ENCODE measurements at regions of chr4 and their contacts with region 1.

Region 1: GRCh38 chr4:159102622-159103383 is at the start of gene RAPGEF2:
- DNase-seq: peak; percentile 95
- H3K4me3 ChIP-seq: peak within 1 kb of the TSS; percentile 67 to 93 (median 87)
- H3K27ac ChIP-seq: peak within 1 kb of the TSS; percentile 92
- H3K4me1 ChIP-seq: peaks cover 19% of the 10 kb centered on the region
- H3K27me3 ChIP-seq: no peaks in the 10 kb centered on the region
- CTCF ChIP-seq: peak in 1 of 2 donors; percentile 2
- total RNA-seq, gene RAPGEF2: 23.4 to 47.2 TPM

Region 2: GRCh38 chr4:158856852-158857251 is 246.0 kb before region 1 on chr4:
- CTCF ChIA-PET with region 1: no interaction called
- dilution Hi-C with region 1: no loop called
- in situ Hi-C with region 1: no loop called
- intact Hi-C with region 1: loop called (anchors 2 kb)
- DNase-seq: peak; percentile 25
- H3K4me3 ChIP-seq: no peak overlapping the region
- H3K27ac ChIP-seq: no peak overlapping the region
- H3K4me1 ChIP-seq: no peaks in the 10 kb centered on the region
- H3K27me3 ChIP-seq: no peaks in the 10 kb centered on the region
- CTCF ChIP-seq: peak; percentile 44 to 63

Region 3: GRCh38 chr4:158895797-158896576 is 206.8 kb before region 1 on chr4:
- CTCF ChIA-PET with region 1: no interaction called
- dilution Hi-C with region 1: no loop called
- in situ Hi-C with region 1: no loop called
- intact Hi-C with region 1: loop called (anchors 2 kb)
- DNase-seq: peak; percentile 5
- H3K4me3 ChIP-seq: no peak overlapping the region
- H3K27ac ChIP-seq: no peak overlapping the region
- H3K4me1 ChIP-seq: no peaks in the 10 kb centered on the region
- H3K27me3 ChIP-seq: no peaks in the 10 kb centered on the region
- CTCF ChIP-seq: peak in 1 of 2 donors; percentile 53

Region 4: GRCh38 chr4:159010563-159011260 is 92.1 kb before region 1 on chr4:
- CTCF ChIA-PET with region 1: no interaction called
- dilution Hi-C with region 1: no loop called
- in situ Hi-C with region 1: loop called in 1 of 2 experiments (anchors 5 kb)
- intact Hi-C with region 1: loop called (anchors 2 kb)
- DNase-seq: peak; percentile 75
- H3K4me3 ChIP-seq: no peak overlapping the region
- H3K27ac ChIP-seq: peak overlapping the region; percentile 44
- H3K4me1 ChIP-seq: peaks cover 31% of the 10 kb centered on the region
- H3K27me3 ChIP-seq: no peaks in the 10 kb centered on the region
- CTCF ChIP-seq: no peak

Region 5: GRCh38 chr4:159077702-159078495 is 24.9 kb before region 1 on chr4:
- CTCF ChIA-PET with region 1: no interaction called
- dilution Hi-C with region 1: no loop called
- in situ Hi-C with region 1: no loop called
- intact Hi-C with region 1: loop called (anchors 2 kb)
- DNase-seq: peak; percentile 88
- H3K4me3 ChIP-seq: peak overlapping the region in 2 of 3 experiments; percentile 34 to 60
- H3K27ac ChIP-seq: peak overlapping the region; percentile 86
- H3K4me1 ChIP-seq: peaks cover 14% of the 10 kb centered on the region
- H3K27me3 ChIP-seq: no peaks in the 10 kb centered on the region
- CTCF ChIP-seq: no peak

Measured in mammary epithelial cell (primary cell).